Activated CD4-positive, alpha-beta memory T cell treated with anti-CD3 and anti-CD28 coated beads, Interleukin-2, amount 10 ng/mL, durations not matched to agents 7 days and 5 days (primary cell): ENCODE measurements at regions of chr1 and their contacts with region 1.

Region 1: DNA sequence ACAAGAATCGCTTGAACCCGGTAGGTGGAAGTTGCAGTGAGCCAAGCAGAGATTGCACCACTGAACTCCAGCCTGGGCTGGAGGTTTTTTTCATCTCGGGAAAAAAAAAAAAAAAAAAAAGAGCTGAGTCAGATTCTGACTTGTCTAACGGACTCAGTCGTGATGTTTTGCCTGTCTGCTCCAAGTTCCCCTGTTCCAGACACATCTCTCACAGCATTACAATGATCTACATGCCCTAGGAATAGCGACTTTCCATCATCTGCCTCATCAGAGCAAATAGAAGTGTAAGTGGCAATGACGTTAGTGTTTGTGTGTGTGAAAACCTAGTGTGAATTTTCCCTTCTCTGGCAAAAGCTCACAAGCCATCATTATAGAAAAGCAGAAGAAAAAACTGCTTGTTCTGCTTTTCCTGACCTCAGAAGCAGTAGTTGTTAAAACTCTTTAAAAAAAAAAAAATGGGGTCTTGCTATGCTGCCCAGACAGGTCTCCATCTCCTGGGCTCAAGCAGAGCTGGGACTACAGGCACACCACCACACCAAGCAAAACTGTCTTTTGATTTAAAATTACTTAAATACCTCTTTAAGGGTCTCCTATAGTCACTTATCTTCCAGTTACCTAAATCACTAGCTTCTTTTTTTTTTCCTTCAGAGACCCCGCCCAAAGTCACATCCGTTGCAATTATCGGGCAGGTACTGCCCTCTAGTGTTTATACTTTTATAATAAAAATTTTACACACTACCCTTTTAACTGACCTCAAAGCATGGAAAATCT is 37.3 kb downstream of the PLEKHO1 start:
- DNase-seq: peak; percentile 32
- H3K4me3 Mint-ChIP-seq: peak overlapping the region; percentile 16
- H3K27ac Mint-ChIP-seq: peak overlapping the region; percentile 41
- H3K4me1 Mint-ChIP-seq: peaks cover 19% of the 10 kb centered on the region
- H3K27me3 Mint-ChIP-seq: no peaks in the 10 kb centered on the region

Region 2: DNA sequence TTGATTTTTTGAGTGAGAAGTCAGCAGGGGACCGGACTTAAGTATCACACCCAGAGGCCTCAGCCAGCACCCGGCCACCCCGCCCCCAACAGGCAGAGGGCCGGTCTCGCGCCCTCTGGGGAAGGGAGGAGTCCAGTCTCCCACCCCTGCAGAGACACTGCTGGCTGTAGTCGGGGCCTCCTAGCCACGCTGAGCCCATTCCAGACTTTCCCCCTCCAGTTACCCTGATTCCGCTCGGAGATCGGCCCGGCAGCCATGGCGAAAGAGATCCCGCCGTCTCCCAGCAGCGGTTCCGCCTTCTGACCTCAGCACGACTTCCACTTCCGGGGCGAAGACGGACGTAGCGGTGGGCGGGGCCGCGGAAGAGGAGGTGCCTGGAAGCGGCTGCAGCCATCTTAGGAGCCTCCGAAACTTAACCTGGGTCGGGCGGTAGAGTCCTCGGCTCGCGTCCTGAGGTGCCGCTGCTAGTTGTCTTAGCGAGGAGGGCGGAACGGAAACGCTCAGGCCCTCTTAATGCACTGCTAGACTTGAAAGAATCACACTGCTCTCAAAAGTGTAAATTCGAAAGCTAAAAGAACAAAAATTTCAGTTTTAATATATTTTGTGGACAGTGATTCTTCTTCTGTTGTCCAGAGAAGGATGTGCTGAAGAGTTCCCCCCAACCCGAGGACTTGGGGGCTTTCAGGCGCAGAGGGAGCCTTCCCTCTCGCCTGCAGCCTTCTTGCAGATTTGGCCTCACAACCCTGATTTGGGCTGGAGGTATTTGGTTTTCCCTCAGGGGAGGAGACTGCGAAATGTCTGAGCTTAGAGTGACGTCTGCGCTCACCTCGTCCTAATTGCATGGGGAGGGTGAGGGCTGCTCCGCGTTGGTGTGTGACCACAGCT is 259.2 kb before region 1 on chr1 and contains the start of gene SF3B4:
- CTCF ChIA-PET with region 1: interaction called, 10 read pairs
- POLR2A ChIA-PET with region 1: interaction called, 3 read pairs
- DNase-seq: peak; percentile 96
- H3K4me3 Mint-ChIP-seq: peak within 1 kb of the TSS; percentile 97
- H3K27ac Mint-ChIP-seq: peak within 1 kb of the TSS; percentile 95
- H3K4me1 Mint-ChIP-seq: peaks cover 74% of the 10 kb centered on the region
- H3K27me3 Mint-ChIP-seq: no peaks in the 10 kb centered on the region
- total RNA-seq, gene SF3B4: 82.3 to 84.3 TPM

Region 3: GRCh38 chr1:150010393-150011115 is 176.4 kb before region 1 on chr1 and contains the start of gene OTUD7B:
- CTCF ChIA-PET with region 1: interaction called, 21 read pairs
- POLR2A ChIA-PET with region 1: interaction called, 14 read pairs
- DNase-seq: peak; percentile 80
- H3K4me3 Mint-ChIP-seq: peak within 1 kb of the TSS; percentile 91
- H3K27ac Mint-ChIP-seq: peak within 1 kb of the TSS; percentile 76
- H3K4me1 Mint-ChIP-seq: peaks cover 35% of the 10 kb centered on the region
- H3K27me3 Mint-ChIP-seq: no peaks in the 10 kb centered on the region
- total RNA-seq, gene OTUD7B: 15.9 to 17.4 TPM

Region 4: DNA sequence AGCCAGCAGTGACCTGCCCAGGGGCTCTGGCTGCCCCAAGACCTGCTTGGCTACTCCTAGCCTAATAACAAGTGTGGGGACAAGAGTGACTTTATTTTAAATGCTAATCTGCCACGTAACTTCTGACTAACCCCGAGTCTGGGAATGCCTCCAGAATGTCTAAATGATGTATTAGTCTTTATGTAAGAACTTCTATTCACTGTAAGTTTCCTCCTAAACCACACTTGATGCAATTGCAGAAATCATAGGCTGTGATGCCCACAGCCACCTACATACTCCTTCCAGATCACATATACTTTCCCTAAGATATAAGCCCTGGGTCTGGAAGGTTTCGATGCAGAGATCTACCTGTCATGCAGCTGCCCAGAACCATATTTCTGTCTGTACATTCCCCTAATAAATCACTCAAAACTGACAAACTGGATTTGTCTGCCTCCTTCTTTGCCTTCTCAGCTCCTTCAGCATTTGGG is 125.3 kb before region 1 on chr1:
- CTCF ChIA-PET with region 1: interaction called, 41 read pairs
- POLR2A ChIA-PET with region 1: interaction called, 5 read pairs
- DNase-seq: no peak
- H3K4me3 Mint-ChIP-seq: no peak overlapping the region
- H3K27ac Mint-ChIP-seq: no peak overlapping the region
- H3K4me1 Mint-ChIP-seq: peaks cover 13% of the 10 kb centered on the region
- H3K27me3 Mint-ChIP-seq: no peaks in the 10 kb centered on the region

Region 5: GRCh38 chr1:150093805-150094204 is 93.2 kb before region 1 on chr1:
- CTCF ChIA-PET with region 1: interaction called, 11 read pairs
- POLR2A ChIA-PET with region 1: no interaction called
- DNase-seq: no peak
- H3K4me3 Mint-ChIP-seq: no peak overlapping the region
- H3K27ac Mint-ChIP-seq: peak overlapping the region; percentile 53
- H3K4me1 Mint-ChIP-seq: peaks cover 39% of the 10 kb centered on the region
- H3K27me3 Mint-ChIP-seq: no peaks in the 10 kb centered on the region

Region 6: GRCh38 chr1:150162862-150163706 is 23.9 kb before region 1 on chr1:
- CTCF ChIA-PET with region 1: interaction called, 61 read pairs
- POLR2A ChIA-PET with region 1: interaction called, 6 read pairs
- DNase-seq: no peak
- H3K4me3 Mint-ChIP-seq: no peak overlapping the region
- H3K27ac Mint-ChIP-seq: no peak overlapping the region
- H3K4me1 Mint-ChIP-seq: peaks cover 63% of the 10 kb centered on the region
- H3K27me3 Mint-ChIP-seq: peaks cover 2% of the 10 kb centered on the region

Region 7: DNA sequence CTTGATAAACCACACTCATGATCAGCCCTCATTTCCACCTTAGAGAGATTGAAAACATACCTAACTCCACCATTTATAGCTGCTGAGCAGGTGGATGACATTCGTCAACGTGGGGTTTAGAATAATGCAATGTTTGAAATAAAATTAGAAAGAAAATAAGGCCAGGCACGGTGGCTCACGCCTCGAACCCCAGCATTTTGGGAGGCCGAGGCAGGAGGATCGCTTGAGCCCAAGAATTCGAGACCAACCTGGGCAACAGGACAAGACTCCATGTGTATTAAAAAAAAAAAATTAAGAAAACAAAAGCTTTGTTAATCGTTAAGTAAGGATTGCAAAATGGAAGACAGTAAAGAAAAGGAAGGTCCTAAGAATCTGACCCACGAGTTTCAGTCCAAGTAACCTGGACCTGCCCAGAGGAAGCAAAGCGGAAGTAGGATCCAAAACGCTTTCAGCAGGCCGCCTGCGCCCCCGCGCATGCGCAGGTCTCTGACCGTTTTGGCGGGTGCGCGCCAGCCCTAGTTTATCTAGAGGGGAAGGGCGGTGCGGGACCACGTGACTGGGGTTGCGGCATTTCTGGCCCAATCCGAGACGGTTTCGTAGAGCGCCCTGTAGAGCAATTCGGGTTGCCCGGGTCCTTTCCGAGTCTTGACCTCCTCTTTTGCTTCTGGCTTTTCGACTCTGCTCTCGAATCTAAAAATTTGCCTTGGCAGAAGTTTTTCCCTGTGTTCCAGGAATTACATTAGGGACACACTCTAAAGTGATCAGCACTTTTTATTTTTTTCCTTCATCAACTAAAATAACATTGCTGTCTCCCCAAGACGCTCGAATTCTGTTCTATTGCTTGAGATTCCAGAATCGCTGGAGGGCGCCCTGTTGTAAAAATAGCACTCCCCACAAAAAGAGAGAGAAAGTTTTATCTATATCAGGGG is 26.5 kb after region 1 on chr1:
- CTCF ChIA-PET with region 1: interaction called, 13 read pairs
- POLR2A ChIA-PET with region 1: no interaction called
- DNase-seq: peak; percentile 95
- H3K4me3 Mint-ChIP-seq: peak overlapping the region; percentile 78
- H3K27ac Mint-ChIP-seq: peak overlapping the region; percentile 93
- H3K4me1 Mint-ChIP-seq: peaks cover 21% of the 10 kb centered on the region
- H3K27me3 Mint-ChIP-seq: no peaks in the 10 kb centered on the region

Region 8: GRCh38 chr1:150596976-150597375 is 410.0 kb after region 1 on chr1:
- CTCF ChIA-PET with region 1: no interaction called
- POLR2A ChIA-PET with region 1: no interaction called
- DNase-seq: no peak
- H3K4me3 Mint-ChIP-seq: no peak overlapping the region
- H3K27ac Mint-ChIP-seq: peak overlapping the region; percentile 70
- H3K4me1 Mint-ChIP-seq: peaks cover 19% of the 10 kb centered on the region
- H3K27me3 Mint-ChIP-seq: no peaks in the 10 kb centered on the region